HCT116 (cell line): ENCODE measurements at regions of chr1 and their contacts with region 1.

Region 1: DNA sequence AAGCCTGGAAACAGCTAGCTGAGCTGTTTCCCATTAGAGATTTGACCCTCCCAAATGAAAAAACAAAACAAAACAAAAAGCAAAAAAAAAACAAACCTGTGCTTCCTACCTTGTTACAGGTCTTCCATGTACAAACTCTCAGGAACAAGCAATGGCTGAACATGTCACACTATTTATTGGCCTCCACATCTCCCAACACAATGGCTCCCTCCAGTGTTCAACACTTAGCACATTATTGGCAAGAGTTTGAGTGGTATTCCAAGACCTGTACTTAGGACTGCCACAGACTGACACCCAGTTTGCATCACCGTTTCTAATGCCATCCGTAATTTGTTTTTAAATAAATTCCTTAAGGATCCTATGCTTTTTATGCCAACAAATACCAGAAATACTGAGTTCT is 195.0 kb upstream of the OLFM3 start:
- DNase-seq: peak; percentile 29
- ATAC-seq: peak; percentile 78; the same call in 1 of the 2 replicates
- H3K4me3 ChIP-seq: no peak overlapping the region
- H3K27ac ChIP-seq: no peak overlapping the region
- H3K4me1 ChIP-seq: no peaks in the 10 kb centered on the region
- H3K27me3 ChIP-seq: no peaks in the 10 kb centered on the region
- CTCF ChIP-seq: peak; percentile 37 to 48 (median 45); a peak in 5 of 6 replicates
- POLR2A ChIP-seq: no peak
- RAD21 ChIP-seq: peak; percentile 61

Region 2: DNA sequence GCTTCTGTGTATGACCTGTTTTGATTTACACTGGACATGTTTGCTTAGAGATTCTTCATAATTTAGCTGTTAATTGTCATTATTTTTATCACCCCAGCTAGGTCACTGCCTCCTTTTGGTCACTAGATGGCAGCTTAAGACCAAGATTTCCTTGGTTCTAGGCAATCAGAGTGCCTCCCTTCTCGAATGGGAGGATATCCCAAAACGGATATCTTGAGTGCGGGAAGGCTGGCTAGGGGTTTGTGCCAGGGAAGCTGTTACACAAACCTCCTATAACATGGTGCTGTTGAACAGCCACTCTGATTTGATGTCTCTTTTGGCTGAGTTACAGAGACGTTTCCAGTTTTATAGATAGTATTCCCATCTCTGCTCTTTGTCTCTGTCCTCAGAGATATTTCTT is 671.4 kb before region 1 on chr1:
- CTCF ChIA-PET with region 1: no interaction called
- POLR2A ChIA-PET with region 1: no interaction called
- RAD21 ChIA-PET with region 1: no interaction called
- intact Hi-C with region 1: loop called (anchors 5 kb)
- DNase-seq: peak; percentile 32
- ATAC-seq: peak; percentile 91
- H3K4me3 ChIP-seq: no peak overlapping the region
- H3K27ac ChIP-seq: no peak overlapping the region
- H3K4me1 ChIP-seq: no peaks in the 10 kb centered on the region
- H3K27me3 ChIP-seq: no peaks in the 10 kb centered on the region
- CTCF ChIP-seq: peak; percentile 36 to 81 (median 73); a peak in 5 of 6 replicates
- POLR2A ChIP-seq: no peak
- RAD21 ChIP-seq: peak; percentile 71

Region 3: GRCh38 chr1:101653482-101653946 is 538.2 kb before region 1 on chr1:
- CTCF ChIA-PET with region 1: interaction called, 3 read pairs
- POLR2A ChIA-PET with region 1: no interaction called
- RAD21 ChIA-PET with region 1: no interaction called
- intact Hi-C with region 1: loop called (anchors 1 kb)
- DNase-seq: peak; percentile 18
- ATAC-seq: peak; percentile 64
- H3K4me3 ChIP-seq: no peak overlapping the region
- H3K27ac ChIP-seq: no peak overlapping the region
- H3K4me1 ChIP-seq: no peaks in the 10 kb centered on the region
- H3K27me3 ChIP-seq: no peaks in the 10 kb centered on the region
- CTCF ChIP-seq: peak; percentile 18 to 51 (median 40); a peak in 4 of 6 replicates
- POLR2A ChIP-seq: no peak
- RAD21 ChIP-seq: peak; percentile 63

Region 4: GRCh38 chr1:101769520-101769919 is 422.2 kb before region 1 on chr1:
- CTCF ChIA-PET with region 1: no interaction called
- POLR2A ChIA-PET with region 1: no interaction called
- RAD21 ChIA-PET with region 1: no interaction called
- intact Hi-C with region 1: loop called (anchors 2 kb)
- DNase-seq: no peak
- ATAC-seq: peak; percentile 57
- H3K4me3 ChIP-seq: no peak overlapping the region
- H3K27ac ChIP-seq: no peak overlapping the region
- H3K4me1 ChIP-seq: no peaks in the 10 kb centered on the region
- H3K27me3 ChIP-seq: no peaks in the 10 kb centered on the region
- CTCF ChIP-seq: peak in 2 of 3 experiments; percentile 31 to 53; a peak in 4 of 6 replicates
- POLR2A ChIP-seq: no peak
- RAD21 ChIP-seq: peak; percentile 24; the same call in 1 of the 2 replicates

Region 5: GRCh38 chr1:101820071-101820470 is 371.7 kb before region 1 on chr1:
- CTCF ChIA-PET with region 1: no interaction called
- POLR2A ChIA-PET with region 1: no interaction called
- RAD21 ChIA-PET with region 1: no interaction called
- intact Hi-C with region 1: loop called (anchors 5 kb)
- DNase-seq: peak; percentile 16
- ATAC-seq: peak; percentile 57; the same call in 1 of the 2 replicates
- H3K4me3 ChIP-seq: no peak overlapping the region
- H3K27ac ChIP-seq: no peak overlapping the region
- H3K4me1 ChIP-seq: no peaks in the 10 kb centered on the region
- H3K27me3 ChIP-seq: no peaks in the 10 kb centered on the region
- CTCF ChIP-seq: peak in 2 of 3 experiments; percentile 29 to 38; a peak in 2 of 6 replicates
- POLR2A ChIP-seq: no peak
- RAD21 ChIP-seq: peak; percentile 58

Region 6: GRCh38 chr1:101996825-101997465 is 194.8 kb before region 1 on chr1 and contains the start of gene OLFM3:
- CTCF ChIA-PET with region 1: no interaction called
- POLR2A ChIA-PET with region 1: no interaction called
- RAD21 ChIA-PET with region 1: no interaction called
- intact Hi-C with region 1: loop called (anchors 10 kb)
- DNase-seq: no peak
- ATAC-seq: no peak
- H3K4me3 ChIP-seq: no peak within 1 kb of the TSS
- H3K27ac ChIP-seq: no peak within 1 kb of the TSS
- H3K4me1 ChIP-seq: no peaks in the 10 kb centered on the region
- H3K27me3 ChIP-seq: no peaks in the 10 kb centered on the region
- CTCF ChIP-seq: no peak
- POLR2A ChIP-seq: no peak
- RAD21 ChIP-seq: no peak
- total RNA-seq, gene OLFM3: not detected

Region 7: GRCh38 chr1:102336602-102337001 is 144.9 kb after region 1 on chr1:
- CTCF ChIA-PET with region 1: no interaction called
- POLR2A ChIA-PET with region 1: no interaction called
- RAD21 ChIA-PET with region 1: no interaction called
- intact Hi-C with region 1: no loop called
- DNase-seq: no peak
- ATAC-seq: no peak
- H3K4me3 ChIP-seq: no peak overlapping the region
- H3K27ac ChIP-seq: no peak overlapping the region
- H3K4me1 ChIP-seq: no peaks in the 10 kb centered on the region
- H3K27me3 ChIP-seq: no peaks in the 10 kb centered on the region
- CTCF ChIP-seq: no peak
- POLR2A ChIP-seq: no peak
- RAD21 ChIP-seq: no peak